ENCODE measurements at regions of chr15 and their contacts with region 1.

Region 1: GRCh38 chr15:72599855-72600464 is 54.5 kb upstream of the GOLGA6B start:
- DNase-seq: peak in 4 of 5 donors; percentile 17 to 30 (median 23)
- H3K4me3 ChIP-seq: no peak overlapping the region
- H3K4me3 Mint-ChIP-seq: no peak overlapping the region
- H3K27ac ChIP-seq: no peak overlapping the region
- H3K27ac Mint-ChIP-seq: no peak overlapping the region
- H3K4me1 ChIP-seq: no peaks in the 10 kb centered on the region
- H3K4me1 Mint-ChIP-seq: no peaks in the 10 kb centered on the region
- H3K27me3 ChIP-seq: no peaks in the 10 kb centered on the region
- H3K27me3 Mint-ChIP-seq: no peaks in the 10 kb centered on the region

Region 2: DNA sequence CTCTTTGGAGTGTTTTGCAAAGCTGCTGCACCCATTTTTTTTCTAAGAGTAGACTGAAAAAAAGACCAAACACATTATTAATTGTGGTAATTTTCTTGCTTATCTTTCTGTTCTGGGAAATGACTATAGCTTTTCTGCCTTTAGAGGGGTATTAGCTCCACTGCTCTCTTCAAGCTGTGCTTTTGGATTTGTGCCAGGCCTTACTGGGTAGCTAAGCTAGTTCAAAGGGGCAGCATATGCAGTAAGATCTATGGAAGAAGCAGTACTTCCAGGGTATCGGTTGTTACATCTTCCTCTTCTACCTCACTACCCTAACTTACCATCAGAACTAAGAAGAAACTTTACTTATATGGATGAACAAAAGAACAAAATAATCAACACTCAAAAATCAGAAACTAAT is 154.5 kb before region 1 on chr15:
- CTCF ChIA-PET with region 1: no interaction called
- POLR2A ChIA-PET with region 1: no interaction called
- intact Hi-C with region 1: no loop called
- DNase-seq: no peak
- H3K4me3 ChIP-seq: no peak overlapping the region
- H3K4me3 Mint-ChIP-seq: no peak overlapping the region
- H3K27ac ChIP-seq: no peak overlapping the region
- H3K27ac Mint-ChIP-seq: no peak overlapping the region
- H3K4me1 ChIP-seq: no peaks in the 10 kb centered on the region
- H3K4me1 Mint-ChIP-seq: no peaks in the 10 kb centered on the region
- H3K27me3 ChIP-seq: no peaks in the 10 kb centered on the region
- H3K27me3 Mint-ChIP-seq: peaks cover 9 to 18% of the 10 kb centered on the region in 2 donors

Region 3: GRCh38 chr15:72584006-72584405 is 16.0 kb before region 1 on chr15:
- CTCF ChIA-PET with region 1: interaction called, 34 read pairs
- POLR2A ChIA-PET with region 1: no interaction called
- intact Hi-C with region 1: no loop called
- DNase-seq: no peak
- H3K4me3 ChIP-seq: no peak overlapping the region
- H3K4me3 Mint-ChIP-seq: no peak overlapping the region
- H3K27ac ChIP-seq: no peak overlapping the region
- H3K27ac Mint-ChIP-seq: peak overlapping the region in 2 of 7 donors; percentile 59 to 60
- H3K4me1 ChIP-seq: no peaks in the 10 kb centered on the region
- H3K4me1 Mint-ChIP-seq: peaks cover 0 to 11% (median 2%) of the 10 kb centered on the region in 4 donors
- H3K27me3 ChIP-seq: no peaks in the 10 kb centered on the region
- H3K27me3 Mint-ChIP-seq: no peaks in the 10 kb centered on the region

Region 4: GRCh38 chr15:72671535-72671934 is 71.6 kb after region 1 on chr15:
- CTCF ChIA-PET with region 1: interaction called, 26 read pairs
- POLR2A ChIA-PET with region 1: no interaction called
- intact Hi-C with region 1: no loop called
- DNase-seq: no peak
- H3K4me3 ChIP-seq: no peak overlapping the region
- H3K4me3 Mint-ChIP-seq: no peak overlapping the region
- H3K27ac ChIP-seq: no peak overlapping the region
- H3K27ac Mint-ChIP-seq: no peak overlapping the region
- H3K4me1 ChIP-seq: peaks cover 4% of the 10 kb centered on the region
- H3K4me1 Mint-ChIP-seq: peaks cover 0 to 4% (median under 1%) of the 10 kb centered on the region in 4 donors
- H3K27me3 ChIP-seq: no peaks in the 10 kb centered on the region
- H3K27me3 Mint-ChIP-seq: peaks cover 7 to 13% of the 10 kb centered on the region in 2 donors

Region 5: GRCh38 chr15:72722071-72722696 is 122.2 kb after region 1 on chr15:
- CTCF ChIA-PET with region 1: no interaction called
- POLR2A ChIA-PET with region 1: no interaction called
- intact Hi-C with region 1: no loop called
- DNase-seq: peak; percentile 40 to 64 (median 60)
- H3K4me3 ChIP-seq: no peak overlapping the region
- H3K4me3 Mint-ChIP-seq: no peak overlapping the region
- H3K27ac ChIP-seq: no peak overlapping the region
- H3K27ac Mint-ChIP-seq: peak overlapping the region in 2 of 7 donors; percentile 27 to 29
- H3K4me1 ChIP-seq: no peaks in the 10 kb centered on the region
- H3K4me1 Mint-ChIP-seq: no peaks in the 10 kb centered on the region
- H3K27me3 ChIP-seq: no peaks in the 10 kb centered on the region
- H3K27me3 Mint-ChIP-seq: no peaks in the 10 kb centered on the region

Region 6: DNA sequence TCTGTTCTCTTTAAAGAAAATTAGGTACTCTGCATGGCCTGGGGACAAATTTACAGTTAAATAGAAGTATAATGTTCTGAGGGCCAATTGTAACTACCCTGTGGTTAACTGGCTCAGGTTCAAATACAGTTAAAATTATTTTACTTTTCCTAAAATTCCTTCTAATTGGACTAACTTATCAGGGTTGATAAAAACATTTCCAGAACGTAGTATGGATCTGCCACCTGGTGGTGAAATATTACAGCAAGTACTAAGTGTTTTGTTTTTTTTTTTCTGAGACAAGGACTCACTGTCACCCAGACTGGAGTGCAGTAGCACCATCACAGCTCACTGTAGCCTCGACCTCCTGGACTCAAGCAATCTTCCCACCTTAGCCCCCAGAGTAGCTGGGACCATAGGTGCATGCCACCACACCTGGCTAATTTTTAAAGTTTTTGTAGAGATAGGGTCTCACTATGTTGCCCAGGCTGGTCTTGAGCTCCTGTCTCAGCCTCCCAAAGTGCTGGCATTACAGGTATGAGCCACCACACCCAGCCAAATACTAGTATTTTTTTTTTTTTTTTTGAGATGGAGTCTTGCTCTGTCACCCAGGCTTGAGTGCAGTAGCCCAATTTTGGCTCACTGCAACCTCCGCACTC is 481.5 kb after region 1 on chr15:
- CTCF ChIA-PET with region 1: interaction called, 7 read pairs
- POLR2A ChIA-PET with region 1: no interaction called
- intact Hi-C with region 1: loop called (anchors 10 kb)
- DNase-seq: peak in 4 of 5 donors; percentile 40 to 51 (median 44)
- H3K4me3 ChIP-seq: no peak overlapping the region
- H3K4me3 Mint-ChIP-seq: no peak overlapping the region
- H3K27ac ChIP-seq: no peak overlapping the region
- H3K27ac Mint-ChIP-seq: no peak overlapping the region
- H3K4me1 ChIP-seq: no peaks in the 10 kb centered on the region
- H3K4me1 Mint-ChIP-seq: peaks cover 0 to 4% (median under 1%) of the 10 kb centered on the region in 4 donors
- H3K27me3 ChIP-seq: no peaks in the 10 kb centered on the region
- H3K27me3 Mint-ChIP-seq: no peaks in the 10 kb centered on the region

Region 7: GRCh38 chr15:73273181-73274002 is 673.4 kb after region 1 on chr15:
- CTCF ChIA-PET with region 1: no interaction called
- POLR2A ChIA-PET with region 1: no interaction called
- intact Hi-C with region 1: loop called (anchors 5 kb)
- DNase-seq: peak; percentile 37 to 50 (median 43)
- H3K4me3 ChIP-seq: no peak overlapping the region
- H3K4me3 Mint-ChIP-seq: peak overlapping the region in 4 of 8 donors; percentile 6 to 76 (median 32)
- H3K27ac ChIP-seq: no peak overlapping the region
- H3K27ac Mint-ChIP-seq: peak overlapping the region in 1 of 7 donors; percentile 67
- H3K4me1 ChIP-seq: no peaks in the 10 kb centered on the region
- H3K4me1 Mint-ChIP-seq: peaks cover 0 to 5% (median 3%) of the 10 kb centered on the region in 4 donors
- H3K27me3 ChIP-seq: no peaks in the 10 kb centered on the region
- H3K27me3 Mint-ChIP-seq: no peaks in the 10 kb centered on the region

Measured in CD4-positive, alpha-beta memory T cell (primary cell).